MCF 10A (cell line): ENCODE measurements at regions of chr5 and their contacts with region 1.

Region 1: GRCh38 chr5:77491783-77492652 is at the start of gene WDR41:
- DNase-seq: peak; percentile 95
- H3K4me3 Mint-ChIP-seq: peak within 1 kb of the TSS; percentile 93
- H3K27ac Mint-ChIP-seq: peak within 1 kb of the TSS; percentile 97
- H3K4me1 Mint-ChIP-seq: peaks cover 23% of the 10 kb centered on the region
- H3K27me3 Mint-ChIP-seq: peaks cover 11% of the 10 kb centered on the region
- CTCF ChIP-seq: peak; percentile 87
- total RNA-seq, gene WDR41: 106 and 107 TPM in 2 replicates

Region 2: GRCh38 chr5:76855961-76856360 is 636.1 kb before region 1 on chr5:
- CTCF ChIA-PET with region 1: no interaction called
- POLR2A ChIA-PET with region 1: no interaction called
- intact Hi-C with region 1: no loop called
- DNase-seq: no peak
- H3K4me3 Mint-ChIP-seq: no peak overlapping the region
- H3K27ac Mint-ChIP-seq: no peak overlapping the region
- H3K4me1 Mint-ChIP-seq: no peaks in the 10 kb centered on the region
- H3K27me3 Mint-ChIP-seq: no peaks in the 10 kb centered on the region
- CTCF ChIP-seq: no peak

Region 3: DNA sequence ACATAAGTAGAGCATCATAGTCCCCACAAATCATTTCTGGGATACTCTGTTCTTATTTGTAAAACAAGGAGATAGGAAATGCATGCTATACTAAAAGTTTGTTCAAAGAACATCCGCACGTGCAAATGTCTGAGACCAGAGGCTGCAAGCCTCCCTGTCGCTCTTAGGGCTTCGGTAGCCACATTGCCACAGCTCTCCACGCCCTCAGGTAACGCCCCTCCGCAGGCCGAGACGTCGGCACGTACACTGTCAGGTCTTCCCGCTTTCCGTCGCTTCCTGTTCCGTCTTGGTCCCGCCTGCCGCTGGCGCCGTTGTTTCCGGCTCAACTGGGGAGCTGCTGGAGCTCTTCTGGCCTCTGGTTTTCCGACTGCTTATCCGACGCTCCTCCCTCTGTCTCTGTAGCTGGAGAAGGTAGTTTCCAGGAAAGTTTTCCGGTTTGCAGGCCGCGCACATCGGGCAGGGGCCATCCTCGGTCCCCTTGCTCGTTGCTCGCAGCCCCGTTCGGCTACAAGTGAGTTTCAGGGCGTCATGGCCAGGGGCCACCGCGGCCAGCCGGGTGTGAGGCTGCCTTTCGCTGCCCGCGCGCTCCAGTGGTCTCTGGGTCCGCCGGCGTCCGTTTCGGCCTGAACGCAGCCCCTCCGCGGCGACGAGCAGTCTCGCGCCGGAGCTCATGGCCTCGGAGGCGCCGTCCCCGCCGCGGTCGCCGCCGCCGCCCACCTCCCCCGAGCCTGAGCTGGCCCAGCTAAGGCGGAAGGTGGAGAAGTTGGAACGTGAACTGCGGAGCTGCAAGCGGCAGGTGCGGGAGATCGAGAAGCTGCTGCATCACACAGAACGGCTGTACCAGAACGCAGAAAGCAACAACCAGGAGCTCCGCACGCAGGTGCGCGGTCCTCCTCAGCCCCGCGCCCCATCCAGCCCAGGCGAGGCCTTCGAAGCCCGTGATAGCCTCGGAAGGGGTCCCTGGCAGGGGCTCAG is 461.6 kb before region 1 on chr5 and contains the start of gene AGGF1:
- CTCF ChIA-PET with region 1: interaction called, 3 read pairs
- POLR2A ChIA-PET with region 1: interaction called, 16 read pairs
- intact Hi-C with region 1: no loop called
- DNase-seq: peak; percentile 91
- H3K4me3 Mint-ChIP-seq: peak within 1 kb of the TSS; percentile 95
- H3K27ac Mint-ChIP-seq: peak within 1 kb of the TSS; percentile 89
- H3K4me1 Mint-ChIP-seq: no peaks in the 10 kb centered on the region
- H3K27me3 Mint-ChIP-seq: no peaks in the 10 kb centered on the region
- CTCF ChIP-seq: no peak
- total RNA-seq, gene AGGF1: 19.5 and 21.8 TPM in 2 replicates

Region 4: DNA sequence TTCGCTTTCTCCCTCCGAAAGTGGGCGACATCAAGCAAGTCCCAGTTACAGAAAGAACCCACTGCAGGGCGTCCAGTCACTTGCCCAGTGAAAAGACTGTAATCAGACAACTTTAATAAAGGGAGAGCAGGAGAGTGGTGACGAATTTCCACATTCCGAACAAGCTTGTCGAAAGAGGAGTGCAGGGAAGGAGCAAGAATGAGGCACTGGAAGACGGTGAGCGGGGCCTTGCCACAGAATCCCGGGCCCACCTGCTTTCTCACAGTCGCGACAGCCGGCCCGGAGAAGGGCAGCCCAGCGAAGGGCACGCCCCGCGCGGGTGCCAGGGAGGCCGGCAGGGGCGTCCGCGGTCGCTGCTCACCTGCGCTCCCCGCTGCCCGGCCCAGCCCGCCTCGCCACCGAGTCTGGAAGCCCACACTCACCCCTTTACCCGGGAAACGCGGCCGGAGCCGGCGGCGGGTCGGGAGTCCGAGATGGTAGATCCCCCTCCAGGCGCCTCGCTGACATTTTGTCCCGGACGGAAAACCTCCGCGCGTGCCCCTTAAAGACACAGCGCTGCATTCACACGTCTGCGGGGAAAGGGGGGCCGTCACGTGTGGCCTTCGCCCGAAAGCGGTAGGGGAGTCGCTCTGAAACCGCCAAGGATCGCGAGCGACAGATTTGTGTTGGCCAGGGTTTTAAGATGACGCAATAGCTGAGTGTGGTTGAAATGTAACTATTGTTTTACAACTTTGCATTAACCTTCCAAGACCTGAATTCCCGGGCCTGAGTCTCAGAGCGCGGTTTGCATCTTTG is 405.1 kb before region 1 on chr5 and contains the start of gene ZBED3:
- CTCF ChIA-PET with region 1: interaction called, 16 read pairs
- POLR2A ChIA-PET with region 1: interaction called, 17 read pairs
- intact Hi-C with region 1: loop called (anchors 2 kb)
- DNase-seq: peak; percentile 86
- H3K4me3 Mint-ChIP-seq: peak within 1 kb of the TSS; percentile 86
- H3K27ac Mint-ChIP-seq: peak within 1 kb of the TSS; percentile 83
- H3K4me1 Mint-ChIP-seq: peaks cover 11% of the 10 kb centered on the region
- H3K27me3 Mint-ChIP-seq: no peaks in the 10 kb centered on the region
- CTCF ChIP-seq: no peak
- total RNA-seq, gene ZBED3: 9.8 and 14.8 TPM in 2 replicates

Region 5: GRCh38 chr5:77133061-77133758 is 358.8 kb before region 1 on chr5:
- CTCF ChIA-PET with region 1: interaction called, 7 read pairs
- POLR2A ChIA-PET with region 1: interaction called, 18 read pairs
- intact Hi-C with region 1: no loop called
- DNase-seq: peak; percentile 99
- H3K4me3 Mint-ChIP-seq: no peak overlapping the region
- H3K27ac Mint-ChIP-seq: peak overlapping the region; percentile 14
- H3K4me1 Mint-ChIP-seq: peaks cover 20% of the 10 kb centered on the region
- H3K27me3 Mint-ChIP-seq: no peaks in the 10 kb centered on the region
- CTCF ChIP-seq: no peak

Region 6: DNA sequence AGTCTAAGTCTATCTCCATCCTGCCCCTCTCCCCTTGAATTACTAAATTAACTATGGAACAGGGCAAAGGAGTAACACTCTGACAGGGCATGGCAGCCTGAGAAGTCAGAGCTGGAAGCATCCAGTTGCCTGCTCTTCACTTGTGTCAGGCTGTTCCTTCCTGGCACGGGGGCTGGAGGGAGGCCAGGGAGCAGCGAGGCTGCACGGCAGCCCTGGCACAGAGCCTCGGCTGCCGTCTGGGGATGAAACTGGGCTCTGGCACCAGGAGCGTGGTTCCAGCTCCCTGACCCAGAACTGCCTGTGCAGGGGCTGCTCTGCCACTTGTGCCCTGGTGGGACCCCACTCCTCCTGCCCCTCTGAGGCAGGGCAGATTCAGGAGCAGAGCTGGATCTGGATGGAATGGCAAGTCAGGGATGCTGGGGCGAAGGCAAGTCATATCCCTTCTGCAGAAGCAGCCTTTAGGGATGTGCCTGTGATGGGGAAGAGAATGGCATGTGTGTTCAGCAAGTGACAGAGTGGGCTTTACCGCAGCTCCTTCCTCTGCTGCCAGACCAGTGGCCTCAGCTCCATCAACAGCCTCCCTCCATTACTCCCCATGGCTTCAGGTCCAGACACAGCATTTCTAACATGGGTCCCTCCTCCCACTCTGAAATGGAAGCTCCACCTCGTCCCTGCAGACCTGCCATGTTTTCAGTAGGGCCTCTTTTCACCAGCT is 323.7 kb before region 1 on chr5:
- CTCF ChIA-PET with region 1: interaction called, 12 read pairs
- POLR2A ChIA-PET with region 1: interaction called, 5 read pairs
- intact Hi-C with region 1: no loop called
- DNase-seq: peak; percentile 70
- H3K4me3 Mint-ChIP-seq: no peak overlapping the region
- H3K27ac Mint-ChIP-seq: peak overlapping the region; percentile 39
- H3K4me1 Mint-ChIP-seq: peaks cover 13% of the 10 kb centered on the region
- H3K27me3 Mint-ChIP-seq: no peaks in the 10 kb centered on the region
- CTCF ChIP-seq: no peak

Region 7: DNA sequence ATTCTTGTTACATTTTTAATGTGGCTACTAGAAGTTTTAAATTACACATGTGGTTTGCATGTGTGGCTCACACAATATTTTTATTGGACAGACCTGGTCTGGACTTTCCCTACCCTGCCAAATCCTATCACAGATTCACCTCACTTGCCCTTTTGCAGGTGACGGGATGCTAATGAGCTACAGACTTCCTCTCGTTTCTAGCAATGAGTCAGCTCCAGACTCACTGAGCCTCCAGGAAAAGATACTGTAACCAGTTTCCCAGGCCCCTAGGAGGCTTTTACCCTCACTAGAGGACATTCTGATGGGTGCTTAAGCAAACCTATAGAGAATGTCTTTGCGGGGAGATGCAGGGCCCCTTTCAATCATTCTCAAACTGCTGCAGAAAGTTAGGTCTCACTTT is 135.3 kb before region 1 on chr5:
- CTCF ChIA-PET with region 1: no interaction called
- POLR2A ChIA-PET with region 1: no interaction called
- intact Hi-C with region 1: no loop called
- DNase-seq: peak; percentile 67
- H3K4me3 Mint-ChIP-seq: no peak overlapping the region
- H3K27ac Mint-ChIP-seq: no peak overlapping the region
- H3K4me1 Mint-ChIP-seq: peaks cover 13% of the 10 kb centered on the region
- H3K27me3 Mint-ChIP-seq: no peaks in the 10 kb centered on the region
- CTCF ChIP-seq: no peak

Region 8: DNA sequence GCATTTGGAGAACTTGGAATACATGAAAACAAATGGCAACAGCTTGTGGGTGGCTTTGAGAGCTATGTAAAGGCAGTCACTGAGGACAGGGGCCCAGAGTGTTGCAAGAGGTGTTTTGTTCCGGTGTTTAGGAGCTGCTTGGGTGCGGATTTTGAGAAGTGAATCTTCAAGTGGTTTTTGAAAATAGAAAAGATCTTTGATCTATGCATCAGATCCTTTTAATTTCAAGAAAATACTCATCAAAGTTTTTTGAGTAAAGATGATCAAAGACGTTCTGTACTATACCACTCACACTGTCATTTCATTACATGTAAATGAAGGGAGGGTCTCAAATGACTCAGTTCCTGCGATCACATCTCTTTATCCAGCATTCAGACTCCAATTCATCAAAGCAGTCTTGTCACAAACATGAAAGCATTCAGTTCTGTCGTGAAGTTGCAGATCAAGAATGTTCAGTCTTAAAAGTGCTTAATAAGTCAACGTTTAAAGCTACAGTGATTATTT is 112.4 kb before region 1 on chr5:
- CTCF ChIA-PET with region 1: no interaction called
- POLR2A ChIA-PET with region 1: no interaction called
- intact Hi-C with region 1: no loop called
- DNase-seq: no peak
- H3K4me3 Mint-ChIP-seq: no peak overlapping the region
- H3K27ac Mint-ChIP-seq: no peak overlapping the region
- H3K4me1 Mint-ChIP-seq: no peaks in the 10 kb centered on the region
- H3K27me3 Mint-ChIP-seq: no peaks in the 10 kb centered on the region
- CTCF ChIP-seq: no peak

Region 9: DNA sequence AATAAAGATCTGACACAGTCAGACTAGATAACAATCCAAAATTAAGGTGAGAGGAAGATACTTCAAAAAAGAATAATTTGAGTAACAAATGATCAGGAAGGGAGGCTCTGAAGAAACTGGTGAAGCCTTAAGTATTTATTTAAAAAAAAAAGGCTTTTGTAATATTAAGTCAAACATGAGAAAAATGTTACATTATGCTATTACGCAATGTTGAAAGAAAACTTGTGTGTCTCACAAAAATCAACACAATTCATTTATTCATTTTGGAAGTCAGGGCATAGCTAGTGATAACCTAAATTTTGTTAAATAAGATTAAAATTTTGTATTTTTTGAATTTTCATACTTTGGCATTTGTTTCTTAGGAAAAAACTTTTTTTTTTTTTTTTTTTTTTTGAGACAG is 28.1 kb before region 1 on chr5:
- CTCF ChIA-PET with region 1: interaction called, 10 read pairs
- POLR2A ChIA-PET with region 1: interaction called, 15 read pairs
- intact Hi-C with region 1: no loop called
- DNase-seq: no peak
- H3K4me3 Mint-ChIP-seq: no peak overlapping the region
- H3K27ac Mint-ChIP-seq: peak overlapping the region; percentile 63
- H3K4me1 Mint-ChIP-seq: peaks cover 8% of the 10 kb centered on the region
- H3K27me3 Mint-ChIP-seq: no peaks in the 10 kb centered on the region
- CTCF ChIP-seq: no peak

Region 10: DNA sequence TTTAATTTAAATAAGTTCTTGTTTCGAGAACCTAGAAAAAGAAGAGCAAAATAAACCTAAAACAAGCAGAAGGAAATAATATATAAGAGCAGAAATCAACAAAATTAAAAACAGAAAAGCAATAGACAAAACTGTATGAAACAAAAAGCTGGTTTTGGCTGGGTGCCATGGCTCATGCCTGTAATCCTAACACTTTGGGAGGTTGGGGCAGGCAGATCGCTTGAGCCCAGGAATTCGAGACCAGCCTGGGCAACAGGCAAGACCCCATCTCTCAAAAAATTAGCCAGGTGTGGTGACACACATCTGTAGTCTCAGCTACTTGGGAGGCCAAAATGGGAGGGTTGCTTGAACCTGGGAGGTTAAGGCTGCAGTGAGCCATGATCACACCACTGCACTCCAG is 205.7 kb after region 1 on chr5:
- CTCF ChIA-PET with region 1: no interaction called
- POLR2A ChIA-PET with region 1: no interaction called
- intact Hi-C with region 1: no loop called
- DNase-seq: peak; percentile 4
- H3K4me3 Mint-ChIP-seq: no peak overlapping the region
- H3K27ac Mint-ChIP-seq: no peak overlapping the region
- H3K4me1 Mint-ChIP-seq: no peaks in the 10 kb centered on the region
- H3K27me3 Mint-ChIP-seq: no peaks in the 10 kb centered on the region
- CTCF ChIP-seq: no peak